B cell (primary cell): ENCODE measurements at regions of chr13 and their contacts with region 1.

Region 1: GRCh38 chr13:77298426-77298825 is 28.5 kb downstream of the MYCBP2 start:
- DNase-seq: peak; percentile 69
- ATAC-seq: peak; percentile 80
- H3K4me3 ChIP-seq: peak overlapping the region; percentile 35 to 61 (median 43)
- H3K4me3 Mint-ChIP-seq: peak overlapping the region; percentile 83
- H3K27ac ChIP-seq: peak overlapping the region; percentile 66 to 71
- H3K27ac Mint-ChIP-seq: peak overlapping the region; percentile 85
- H3K4me1 ChIP-seq: peaks cover 40 to 60% of the 10 kb centered on the region in 2 donors
- H3K4me1 Mint-ChIP-seq: peaks cover 64% of the 10 kb centered on the region
- H3K27me3 ChIP-seq: no peaks in the 10 kb centered on the region
- H3K27me3 Mint-ChIP-seq: no peaks in the 10 kb centered on the region
- CTCF ChIP-seq: no peak

Region 2: GRCh38 chr13:77239312-77239711 is 59.1 kb before region 1 on chr13:
- CTCF ChIA-PET with region 1: no interaction called
- POLR2A ChIA-PET with region 1: no interaction called
- intact Hi-C with region 1: loop called (anchors 5 kb)
- DNase-seq: no peak
- ATAC-seq: no peak
- H3K4me3 ChIP-seq: no peak overlapping the region
- H3K4me3 Mint-ChIP-seq: no peak overlapping the region
- H3K27ac ChIP-seq: no peak overlapping the region
- H3K27ac Mint-ChIP-seq: peak overlapping the region; percentile 32
- H3K4me1 ChIP-seq: no peaks in the 10 kb centered on the region
- H3K4me1 Mint-ChIP-seq: no peaks in the 10 kb centered on the region
- H3K27me3 ChIP-seq: no peaks in the 10 kb centered on the region
- H3K27me3 Mint-ChIP-seq: no peaks in the 10 kb centered on the region
- CTCF ChIP-seq: no peak

Region 3: DNA sequence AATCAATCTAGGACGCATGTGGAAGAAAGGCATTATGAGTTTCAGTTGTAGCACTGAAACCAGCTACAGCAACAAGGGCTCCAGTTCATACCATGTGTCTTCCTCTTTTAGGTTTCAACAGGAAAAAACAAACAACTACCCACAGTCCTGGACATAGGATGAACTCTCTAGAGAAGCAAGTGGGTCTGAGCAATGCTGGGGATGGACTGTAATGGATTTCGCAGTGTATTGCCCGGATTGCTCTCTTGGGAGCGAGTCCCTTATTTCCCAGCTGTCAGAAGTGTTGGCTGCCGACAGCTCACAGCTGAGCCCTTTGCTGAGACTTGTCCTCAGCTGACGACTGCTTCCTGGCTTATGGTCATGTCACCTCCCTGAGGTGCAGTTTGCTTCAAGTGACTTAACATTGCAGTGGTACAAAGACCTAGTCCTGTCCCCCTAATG is 40.6 kb after region 1 on chr13:
- CTCF ChIA-PET with region 1: interaction called, 3 read pairs
- POLR2A ChIA-PET with region 1: no interaction called
- intact Hi-C with region 1: loop called (anchors 5 kb)
- DNase-seq: peak; percentile 79
- ATAC-seq: peak; percentile 77
- H3K4me3 ChIP-seq: peak overlapping the region; percentile 32 to 50 (median 45)
- H3K4me3 Mint-ChIP-seq: peak overlapping the region; percentile 72
- H3K27ac ChIP-seq: peak overlapping the region; percentile 91 to 92
- H3K27ac Mint-ChIP-seq: peak overlapping the region; percentile 86
- H3K4me1 ChIP-seq: peaks cover 61 to 65% of the 10 kb centered on the region in 2 donors
- H3K4me1 Mint-ChIP-seq: peaks cover 76% of the 10 kb centered on the region
- H3K27me3 ChIP-seq: no peaks in the 10 kb centered on the region
- H3K27me3 Mint-ChIP-seq: no peaks in the 10 kb centered on the region
- CTCF ChIP-seq: no peak

Region 4: GRCh38 chr13:77506874-77507273 is 208.4 kb after region 1 on chr13:
- CTCF ChIA-PET with region 1: no interaction called
- POLR2A ChIA-PET with region 1: no interaction called
- intact Hi-C with region 1: no loop called
- DNase-seq: no peak
- ATAC-seq: no peak
- H3K4me3 ChIP-seq: no peak overlapping the region
- H3K4me3 Mint-ChIP-seq: no peak overlapping the region
- H3K27ac ChIP-seq: no peak overlapping the region
- H3K27ac Mint-ChIP-seq: no peak overlapping the region
- H3K4me1 ChIP-seq: peaks cover 20 to 22% of the 10 kb centered on the region in 2 donors
- H3K4me1 Mint-ChIP-seq: peaks cover 18% of the 10 kb centered on the region
- H3K27me3 ChIP-seq: peaks cover 0 to 4% (median 2%) of the 10 kb centered on the region in 4 experiments
- H3K27me3 Mint-ChIP-seq: peaks cover 4% of the 10 kb centered on the region
- CTCF ChIP-seq: peak; percentile 10